IMR-90 (cell line): ENCODE measurements at regions of chr12 and their contacts with region 1.

Region 1: GRCh38 chr12:59444932-59445331 is 150.9 kb upstream of the SLC16A7 start:
- DNase-seq: peak; percentile 15
- ATAC-seq: no peak
- H3K4me3 ChIP-seq: no peak overlapping the region
- H3K27ac ChIP-seq: no peak overlapping the region
- H3K4me1 ChIP-seq: no peaks in the 10 kb centered on the region
- H3K27me3 ChIP-seq: no peaks in the 10 kb centered on the region
- CTCF ChIP-seq: peak; percentile 51
- POLR2A ChIP-seq: no peak
- RAD21 ChIP-seq: peak; percentile 51

Region 2: DNA sequence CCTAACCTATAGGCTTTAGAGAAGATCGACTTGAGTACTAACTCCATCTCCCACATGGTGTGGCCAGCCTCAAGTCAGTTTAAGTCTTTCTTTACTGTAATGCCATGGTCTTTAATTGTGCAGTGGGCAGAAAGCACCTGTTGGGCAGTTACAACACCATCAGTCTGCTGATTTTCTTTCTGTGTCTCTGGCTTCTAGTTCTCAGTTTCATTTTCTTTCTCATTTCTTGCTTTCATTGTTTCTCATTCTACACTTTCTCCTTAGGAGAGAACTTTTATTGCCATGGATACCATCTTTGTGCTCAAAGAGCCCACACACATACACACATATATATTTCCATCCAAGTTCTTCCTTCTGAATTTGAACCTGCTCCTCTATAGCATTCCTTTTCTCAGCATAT is 54.8 kb after region 1 on chr12:
- CTCF ChIA-PET with region 1: no interaction called
- POLR2A ChIA-PET with region 1: no interaction called
- dilution Hi-C with region 1: no loop called
- in situ Hi-C with region 1: no loop called
- intact Hi-C with region 1: no loop called
- DNase-seq: no peak
- ATAC-seq: no peak
- H3K4me3 ChIP-seq: no peak overlapping the region
- H3K27ac ChIP-seq: no peak overlapping the region
- H3K4me1 ChIP-seq: no peaks in the 10 kb centered on the region
- H3K27me3 ChIP-seq: no peaks in the 10 kb centered on the region
- CTCF ChIP-seq: no peak
- POLR2A ChIP-seq: no peak
- RAD21 ChIP-seq: no peak

Region 3: GRCh38 chr12:59678759-59679411 is 234.0 kb after region 1 on chr12:
- CTCF ChIA-PET with region 1: no interaction called
- POLR2A ChIA-PET with region 1: no interaction called
- dilution Hi-C with region 1: no loop called
- in situ Hi-C with region 1: no loop called
- intact Hi-C with region 1: no loop called
- DNase-seq: no peak
- ATAC-seq: no peak
- H3K4me3 ChIP-seq: no peak overlapping the region
- H3K27ac ChIP-seq: no peak overlapping the region
- H3K4me1 ChIP-seq: no peaks in the 10 kb centered on the region
- H3K27me3 ChIP-seq: no peaks in the 10 kb centered on the region
- CTCF ChIP-seq: no peak
- POLR2A ChIP-seq: no peak
- RAD21 ChIP-seq: no peak

Region 4: DNA sequence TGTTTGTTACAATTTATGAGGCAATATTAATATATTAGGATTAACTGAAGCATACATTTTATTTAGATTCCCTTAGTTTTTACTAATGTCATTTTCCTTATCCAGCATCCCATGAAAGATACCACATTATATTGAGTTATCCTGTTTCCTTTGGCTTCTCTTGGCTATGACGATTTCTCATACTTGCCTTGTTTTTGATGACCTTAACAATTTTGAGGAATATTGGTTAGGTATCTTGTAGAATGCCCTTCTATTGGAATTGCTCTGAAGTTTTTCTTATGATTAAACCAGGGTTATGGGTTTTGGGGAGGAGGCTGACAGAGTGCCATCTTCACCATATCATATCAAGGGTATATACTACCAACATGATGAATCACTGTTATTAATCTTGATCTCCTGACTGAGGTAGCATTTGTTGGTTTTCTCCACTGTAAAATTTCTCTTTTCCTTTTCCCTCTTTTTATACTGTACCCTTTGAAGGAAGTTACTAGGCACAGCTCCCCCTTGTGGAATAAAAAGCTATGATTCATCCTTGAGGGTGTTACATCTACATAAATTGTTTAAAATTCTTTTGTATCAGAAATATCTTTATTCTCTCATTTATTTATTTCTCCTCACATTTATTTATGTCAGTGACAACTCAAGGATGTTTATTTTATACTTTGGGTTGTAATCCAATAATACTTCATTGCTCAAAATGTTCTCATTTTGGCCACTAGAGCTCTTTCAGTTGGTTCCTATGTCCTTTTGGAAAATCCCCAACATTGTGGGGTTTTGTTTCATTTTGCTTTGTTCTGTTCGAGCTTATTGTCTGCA is 389.9 kb after region 1 on chr12:
- CTCF ChIA-PET with region 1: interaction called, 3 read pairs
- POLR2A ChIA-PET with region 1: no interaction called
- dilution Hi-C with region 1: no loop called
- in situ Hi-C with region 1: no loop called
- intact Hi-C with region 1: loop called (anchors 10 kb)
- DNase-seq: peak; percentile 47
- ATAC-seq: no peak; the same call in 1 of the 2 replicates
- H3K4me3 ChIP-seq: no peak overlapping the region
- H3K27ac ChIP-seq: no peak overlapping the region
- H3K4me1 ChIP-seq: no peaks in the 10 kb centered on the region
- H3K27me3 ChIP-seq: no peaks in the 10 kb centered on the region
- CTCF ChIP-seq: peak; percentile 63
- POLR2A ChIP-seq: no peak
- RAD21 ChIP-seq: peak; percentile 59

Region 5: GRCh38 chr12:59861635-59862034 is 416.7 kb after region 1 on chr12:
- CTCF ChIA-PET with region 1: no interaction called
- POLR2A ChIA-PET with region 1: no interaction called
- dilution Hi-C with region 1: no loop called
- in situ Hi-C with region 1: no loop called
- intact Hi-C with region 1: no loop called
- DNase-seq: peak; percentile 28
- ATAC-seq: no peak; the same call in 1 of the 2 replicates
- H3K4me3 ChIP-seq: no peak overlapping the region
- H3K27ac ChIP-seq: no peak overlapping the region
- H3K4me1 ChIP-seq: no peaks in the 10 kb centered on the region
- H3K27me3 ChIP-seq: no peaks in the 10 kb centered on the region
- CTCF ChIP-seq: no peak
- POLR2A ChIP-seq: no peak
- RAD21 ChIP-seq: no peak